A673 (cell line): ENCODE measurements at regions of chr14 and their contacts with region 1.

Region 1: GRCh38 chr14:29403091-29403490 is 524.6 kb downstream of the PRKD1 start:
- DNase-seq: no peak
- H3K4me3 ChIP-seq: no peak overlapping the region
- H3K27ac ChIP-seq: no peak overlapping the region
- H3K4me1 ChIP-seq: no peaks in the 10 kb centered on the region
- H3K27me3 ChIP-seq: peaks cover 30% of the 10 kb centered on the region
- CTCF ChIP-seq: no peak

Region 2: DNA sequence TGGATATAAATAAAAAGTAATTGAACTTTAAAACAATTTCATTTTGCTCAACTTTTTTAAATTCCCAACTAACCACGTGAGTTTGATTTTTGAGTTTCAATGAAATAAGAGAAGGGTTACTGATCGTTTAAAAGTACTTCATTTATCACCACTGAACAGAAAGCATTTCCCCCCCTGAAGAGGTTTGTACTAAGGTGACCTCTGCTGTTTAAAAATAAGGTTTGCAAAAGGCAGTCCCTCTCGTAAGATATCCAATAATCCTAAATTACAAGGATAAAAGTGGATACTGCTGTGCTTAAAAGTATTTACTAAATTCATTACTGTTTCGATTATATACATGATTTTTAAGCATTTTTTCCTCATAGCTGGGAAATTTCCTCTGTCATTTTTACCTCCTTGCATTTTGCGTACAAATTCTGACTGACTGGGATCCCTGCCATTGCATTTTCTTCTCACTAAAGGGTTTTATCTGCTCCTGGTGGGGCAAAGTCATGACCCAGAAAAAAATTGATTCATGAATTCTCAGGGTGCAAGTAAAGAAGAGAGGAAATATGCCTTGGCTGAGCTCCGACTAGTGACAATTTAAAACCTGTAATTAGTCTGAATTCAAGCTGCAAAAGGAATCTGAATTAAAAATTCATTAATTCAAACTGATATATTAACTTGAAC is 60.8 kb after region 1 on chr14:
- CTCF ChIA-PET with region 1: no interaction called
- POLR2A ChIA-PET with region 1: no interaction called
- intact Hi-C with region 1: loop called (anchors 2 kb)
- DNase-seq: peak; percentile 33
- H3K4me3 ChIP-seq: no peak overlapping the region
- H3K27ac ChIP-seq: no peak overlapping the region
- H3K4me1 ChIP-seq: peaks cover 13% of the 10 kb centered on the region
- H3K27me3 ChIP-seq: peaks cover 16% of the 10 kb centered on the region
- CTCF ChIP-seq: peak; percentile 36; the same call in 1 of the 2 replicates